ENCODE measurements at regions of chr22 and their contacts with region 1.

Region 1: DNA sequence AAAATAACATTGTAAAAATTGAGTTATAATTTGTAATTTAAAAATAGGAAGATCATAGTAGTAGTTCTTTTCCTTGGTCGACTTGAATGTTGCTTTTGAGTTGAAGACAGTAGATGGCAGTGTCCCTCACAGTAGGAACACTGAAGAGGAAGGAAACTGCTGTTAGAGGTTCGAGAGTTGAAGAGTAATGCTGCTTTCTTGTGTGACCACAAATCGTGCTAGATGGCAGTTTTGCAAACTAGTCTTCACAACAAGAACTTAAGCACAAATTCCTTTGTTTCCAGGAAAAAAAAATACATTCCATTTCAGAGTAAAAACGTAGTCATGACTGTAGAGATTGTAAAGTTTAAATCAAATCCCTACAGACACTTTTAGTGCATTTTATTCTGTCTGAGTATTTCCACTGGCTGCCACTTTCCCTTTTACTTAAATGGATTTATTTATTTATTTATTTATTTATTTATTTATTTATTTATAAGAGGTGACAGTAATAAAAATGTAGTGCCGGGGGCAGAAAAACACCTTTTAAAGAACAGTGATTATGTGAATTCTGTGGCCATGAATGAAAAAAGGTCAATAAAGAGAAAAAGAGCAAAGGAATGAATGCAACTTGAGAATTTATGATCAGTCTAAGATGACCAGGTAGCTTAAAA is 54.6 kb downstream of the SPECC1L start:
- DNase-seq: no peak

Region 2: GRCh38 chr22:24284747-24285203 is 40.5 kb before region 1 on chr22:
- intact Hi-C with region 1: loop called (anchors 2 kb)
- DNase-seq: no peak

Region 3: GRCh38 chr22:24510637-24511625 is 185.7 kb after region 1 on chr22:
- intact Hi-C with region 1: loop called (anchors 5 kb)
- DNase-seq: no peak

Region 4: DNA sequence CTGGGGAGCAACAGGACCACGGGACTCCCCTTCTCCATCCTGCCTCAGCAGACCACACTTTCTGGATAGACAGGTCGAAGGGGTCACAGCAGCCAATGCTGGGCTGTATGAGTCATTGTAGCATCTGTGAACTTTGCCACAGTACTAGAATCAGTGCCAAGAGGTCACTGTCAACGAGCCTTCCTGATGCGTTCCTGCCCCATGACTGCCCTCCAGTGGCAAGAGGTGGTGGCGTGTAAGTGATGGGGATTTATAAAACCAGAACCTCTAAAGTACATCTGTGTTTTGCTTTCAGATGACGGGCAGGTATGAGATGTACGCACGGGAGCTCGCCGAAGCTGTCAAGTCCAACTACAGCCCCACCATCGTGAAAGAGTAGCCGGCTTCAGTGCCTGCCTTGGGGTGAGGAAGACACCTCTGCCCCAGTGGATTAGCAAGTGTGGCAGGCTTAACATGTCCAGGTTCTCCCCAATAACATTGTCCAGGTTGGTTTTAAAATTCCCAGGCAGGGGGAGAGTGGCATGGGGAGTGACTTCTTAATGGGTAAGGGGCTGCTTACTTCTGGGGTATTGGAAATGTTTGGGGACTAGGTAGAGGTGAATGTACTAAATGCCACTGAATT is 200.3 kb after region 1 on chr22:
- intact Hi-C with region 1: loop called (anchors 5 kb)
- DNase-seq: peak; percentile 90